Transverse colon (tissue), 4 donors: ENCODE measurements at regions of chr3 and their contacts with region 1.

Region 1: DNA sequence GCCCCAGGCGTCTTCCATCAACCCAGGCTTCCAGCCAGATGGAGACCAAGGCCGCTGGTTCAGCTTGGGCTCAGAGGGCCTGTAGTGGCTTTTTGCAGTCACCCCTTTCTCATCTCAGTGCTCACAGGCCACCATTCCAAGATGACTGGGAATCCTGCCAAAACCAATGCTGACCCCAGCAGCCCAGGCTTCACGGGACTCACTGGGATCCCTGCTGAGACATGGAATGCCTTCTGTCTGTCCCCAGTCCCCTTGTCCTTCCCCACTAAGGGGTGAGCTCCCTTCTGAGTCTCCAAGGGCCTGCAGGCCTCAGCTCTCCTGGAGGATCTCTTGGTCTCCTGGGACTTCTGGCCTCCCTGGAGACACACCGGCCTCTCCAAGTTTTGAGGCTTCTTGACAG is 77.4 kb upstream of the SEC13 start:
- DNase-seq: no peak
- H3K4me3 ChIP-seq: no peak overlapping the region
- H3K27ac ChIP-seq: no peak overlapping the region
- H3K4me1 ChIP-seq: no peaks in the 10 kb centered on the region
- H3K27me3 ChIP-seq: no peaks in the 10 kb centered on the region
- CTCF ChIP-seq: no peak
- EP300 ChIP-seq: no peak
- POLR2A ChIP-seq: no peak

Region 2: DNA sequence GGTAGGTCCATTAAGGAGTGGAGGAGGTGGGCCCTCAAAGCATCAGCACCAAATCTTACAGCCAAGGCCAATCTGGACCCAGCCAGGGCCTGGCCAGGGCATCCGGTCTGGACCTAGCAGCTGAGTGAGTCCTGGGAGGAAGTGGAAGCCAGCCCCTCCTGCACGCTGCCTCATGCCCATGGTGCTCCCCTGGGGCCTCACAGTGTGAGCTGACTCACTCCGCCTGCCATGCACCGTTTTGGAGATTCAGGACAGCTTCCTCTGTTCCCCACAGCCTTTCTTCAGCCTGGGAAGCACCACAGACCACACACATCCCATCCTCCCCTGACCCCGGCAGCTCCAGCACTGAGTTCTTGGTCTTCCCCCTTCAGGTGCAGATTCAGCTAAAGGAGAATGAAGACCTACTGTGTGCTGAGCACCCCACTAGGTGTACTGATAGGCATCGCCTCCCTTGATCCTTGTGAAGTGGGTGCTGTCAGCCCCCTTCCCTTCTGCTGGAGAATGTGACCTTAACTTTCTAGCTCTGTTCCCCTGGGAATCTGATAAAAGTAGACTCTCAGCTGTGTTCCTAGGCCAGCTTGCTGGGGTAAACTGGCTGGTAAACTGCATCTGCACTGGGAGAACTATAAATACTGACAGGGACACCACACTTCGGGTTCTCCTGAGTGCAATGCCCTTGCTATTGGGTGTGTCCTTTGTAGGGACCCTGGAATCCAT is 40.6 kb before region 1 on chr3:
- in situ Hi-C with region 1: no loop called
- intact Hi-C with region 1: loop called (anchors 2 kb)
- DNase-seq: no peak
- H3K4me3 ChIP-seq: no peak overlapping the region
- H3K27ac ChIP-seq: no peak overlapping the region
- H3K4me1 ChIP-seq: peaks cover 0 to 3% (median 0%) of the 10 kb centered on the region in 4 donors
- H3K27me3 ChIP-seq: no peaks in the 10 kb centered on the region
- CTCF ChIP-seq: no peak
- EP300 ChIP-seq: no peak
- POLR2A ChIP-seq: no peak